ENCODE measurements at regions of chr1 and their contacts with region 1.

Region 1: GRCh38 chr1:99590578-99591209 is 55.2 kb upstream of the PALMD start:
- DNase-seq: peak; percentile 22 to 62
- ATAC-seq: peak; percentile 16 to 93 (median 81)
- H3K4me3 ChIP-seq: no peak overlapping the region
- H3K27ac ChIP-seq: peak overlapping the region in 8 of 10 donors; percentile 41 to 72 (median 54)
- H3K4me1 ChIP-seq: peaks cover 5 to 39% (median 16%) of the 10 kb centered on the region in 9 donors
- H3K27me3 ChIP-seq: no peaks in the 10 kb centered on the region
- CTCF ChIP-seq: no peak

Region 2: GRCh38 chr1:99548943-99549605 is 41.6 kb before region 1 on chr1:
- intact Hi-C with region 1: loop called in 1 of 10 experiments (anchors 5 kb)
- DNase-seq: peak in 1 of 2 donors; percentile 82
- ATAC-seq: peak; percentile 82 to 100 (median 98)
- H3K4me3 ChIP-seq: peak overlapping the region in 2 of 10 donors; percentile 2 to 15
- H3K27ac ChIP-seq: peak overlapping the region in 9 of 10 donors; percentile 24 to 70 (median 60)
- H3K4me1 ChIP-seq: peaks cover 0 to 28% (median 13%) of the 10 kb centered on the region in 9 donors
- H3K27me3 ChIP-seq: no peaks in the 10 kb centered on the region
- CTCF ChIP-seq: no peak

Region 3: DNA sequence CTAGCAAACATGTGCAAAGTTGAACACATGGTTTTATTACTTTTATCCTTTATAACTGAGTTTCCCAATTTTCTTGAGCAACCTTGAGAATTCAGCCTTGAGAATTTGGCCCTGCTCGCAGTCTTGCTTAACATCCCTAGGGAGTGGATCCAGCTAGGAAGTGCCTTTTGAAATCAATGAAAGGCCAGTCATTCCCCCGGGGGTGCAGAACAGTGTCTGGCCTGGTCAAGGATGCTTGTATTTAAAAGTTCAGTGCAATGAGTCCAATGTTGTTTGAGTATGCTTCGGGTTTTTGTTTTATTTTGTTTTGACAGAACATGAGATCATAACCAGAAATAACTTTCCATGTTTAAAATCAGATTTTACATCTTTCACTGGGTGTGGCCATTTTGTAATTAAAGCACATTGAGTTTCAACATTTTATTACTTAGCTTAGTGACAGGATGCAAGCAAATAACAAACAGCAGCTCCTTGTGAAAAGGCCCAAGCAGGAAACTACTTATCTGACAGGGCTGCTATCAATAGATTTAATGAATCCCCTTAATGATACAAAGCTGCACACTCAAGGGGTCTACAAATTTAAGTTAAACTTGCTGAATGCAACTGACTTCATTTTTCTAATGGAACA is 72.0 kb after region 1 on chr1:
- intact Hi-C with region 1: no loop called
- DNase-seq: peak; percentile 65 to 83
- ATAC-seq: peak; percentile 79 to 92 (median 88)
- H3K4me3 ChIP-seq: peak overlapping the region in 1 of 10 donors; percentile 2
- H3K27ac ChIP-seq: peak overlapping the region; percentile 8 to 99 (median 80)
- H3K4me1 ChIP-seq: peaks cover 12 to 100% (median 88%) of the 10 kb centered on the region in 9 donors
- H3K27me3 ChIP-seq: no peaks in the 10 kb centered on the region
- CTCF ChIP-seq: no peak

Region 4: GRCh38 chr1:99691175-99691574 is 100.5 kb after region 1 on chr1:
- intact Hi-C with region 1: loop called in 1 of 10 experiments (anchors 10 kb)
- DNase-seq: no peak
- ATAC-seq: peak; percentile 37 to 83 (median 67)
- H3K4me3 ChIP-seq: no peak overlapping the region
- H3K27ac ChIP-seq: peak overlapping the region in 8 of 10 donors; percentile 26 to 74 (median 57)
- H3K4me1 ChIP-seq: peaks cover 0 to 45% (median 26%) of the 10 kb centered on the region in 9 donors
- H3K27me3 ChIP-seq: no peaks in the 10 kb centered on the region
- CTCF ChIP-seq: no peak